Activated T-helper 1 cell treated with anti-CD3 and anti-CD28 coated beads, Interleukin-12 subunit alpha, Interleukin-12 subunit beta, Interleukin-2, Interleukin-4 antibody, amounts not matched to agents 30 ng/mL and 10 ng/mL and 1 ng/mL, durations not matched to agents 14 hours and 24 hours and 36 hours (primary cell): ENCODE measurements at regions of chr16 and their contacts with region 1.

Region 1: GRCh38 chr16:75110637-75111513 is 5.7 kb downstream of the LDHD start:
- DNase-seq: peak; percentile 77
- H3K4me3 Mint-ChIP-seq: peak overlapping the region; percentile 79
- H3K27ac Mint-ChIP-seq: peak overlapping the region; percentile 92
- H3K4me1 Mint-ChIP-seq: peaks cover 62% of the 10 kb centered on the region
- H3K27me3 Mint-ChIP-seq: no peaks in the 10 kb centered on the region

Region 2: GRCh38 chr16:74936902-74937560 is 173.8 kb before region 1 on chr16:
- intact Hi-C with region 1: loop called (anchors 1 kb)
- DNase-seq: no peak
- H3K4me3 Mint-ChIP-seq: no peak overlapping the region
- H3K27ac Mint-ChIP-seq: peak overlapping the region; percentile 72
- H3K4me1 Mint-ChIP-seq: peaks cover 6% of the 10 kb centered on the region
- H3K27me3 Mint-ChIP-seq: no peaks in the 10 kb centered on the region

Region 3: GRCh38 chr16:74998481-74999218 is 112.2 kb before region 1 on chr16 and contains the start of gene ZNRF1:
- intact Hi-C with region 1: loop called (anchors 1 kb)
- DNase-seq: peak; percentile 74
- H3K4me3 Mint-ChIP-seq: peak within 1 kb of the TSS; percentile 91
- H3K27ac Mint-ChIP-seq: peak within 1 kb of the TSS; percentile 86
- H3K4me1 Mint-ChIP-seq: peaks cover 43% of the 10 kb centered on the region
- H3K27me3 Mint-ChIP-seq: peaks cover 2% of the 10 kb centered on the region
- total RNA-seq, gene ZNRF1: 51.2 and 52.2 TPM in 2 replicates

Region 4: GRCh38 chr16:75064403-75065148 is 46.3 kb before region 1 on chr16:
- intact Hi-C with region 1: loop called (anchors 1 kb)
- DNase-seq: peak; percentile 17
- H3K4me3 Mint-ChIP-seq: peak overlapping the region; percentile 70
- H3K27ac Mint-ChIP-seq: peak overlapping the region; percentile 85
- H3K4me1 Mint-ChIP-seq: peaks cover 79% of the 10 kb centered on the region
- H3K27me3 Mint-ChIP-seq: no peaks in the 10 kb centered on the region

Region 5: DNA sequence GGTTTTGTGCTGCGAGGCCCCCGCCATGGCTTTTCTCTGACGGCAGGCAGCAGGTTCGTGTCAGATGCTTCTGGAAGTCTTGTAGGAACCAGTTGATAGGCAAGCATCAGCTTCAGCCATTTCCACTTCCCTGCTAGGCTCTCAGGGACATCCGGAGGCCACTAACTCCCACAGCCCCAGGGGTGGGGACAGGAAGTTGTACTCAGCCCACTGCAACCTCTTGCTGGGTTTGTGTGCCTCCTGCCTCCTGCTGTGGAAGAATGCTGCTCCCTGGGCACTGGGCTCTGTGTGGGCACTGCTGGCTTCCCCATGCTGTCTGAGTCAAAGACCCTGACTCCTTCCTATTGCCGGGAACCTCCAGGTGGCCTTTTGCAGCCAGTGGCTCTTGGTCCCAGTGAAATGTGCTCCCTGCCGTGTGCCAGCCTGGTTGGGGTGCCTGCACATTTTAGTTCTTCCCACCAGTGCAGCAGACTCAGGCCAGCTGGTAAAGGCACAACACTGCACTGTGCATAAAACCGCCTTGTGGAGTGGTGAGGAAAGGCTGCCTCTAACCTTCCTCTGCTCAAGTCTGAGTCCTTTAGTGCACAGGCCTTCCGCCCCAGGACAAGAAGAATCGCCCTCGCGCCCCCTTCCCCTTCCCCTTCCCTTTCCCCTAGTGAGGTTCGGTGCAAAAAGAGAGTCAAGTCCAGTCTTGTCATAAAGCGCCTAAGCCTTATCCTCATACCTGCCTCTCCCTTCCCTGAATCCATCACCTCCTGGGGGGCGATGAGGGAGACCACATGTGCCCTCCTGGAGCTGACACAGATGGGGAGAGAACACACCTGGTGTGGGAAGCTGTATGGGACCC is 10.9 kb before region 1 on chr16:
- intact Hi-C with region 1: loop called (anchors 1 kb)
- DNase-seq: peak; percentile 41
- H3K4me3 Mint-ChIP-seq: peak overlapping the region; percentile 46
- H3K27ac Mint-ChIP-seq: peak overlapping the region; percentile 95
- H3K4me1 Mint-ChIP-seq: peaks cover 83% of the 10 kb centered on the region
- H3K27me3 Mint-ChIP-seq: no peaks in the 10 kb centered on the region

Region 6: DNA sequence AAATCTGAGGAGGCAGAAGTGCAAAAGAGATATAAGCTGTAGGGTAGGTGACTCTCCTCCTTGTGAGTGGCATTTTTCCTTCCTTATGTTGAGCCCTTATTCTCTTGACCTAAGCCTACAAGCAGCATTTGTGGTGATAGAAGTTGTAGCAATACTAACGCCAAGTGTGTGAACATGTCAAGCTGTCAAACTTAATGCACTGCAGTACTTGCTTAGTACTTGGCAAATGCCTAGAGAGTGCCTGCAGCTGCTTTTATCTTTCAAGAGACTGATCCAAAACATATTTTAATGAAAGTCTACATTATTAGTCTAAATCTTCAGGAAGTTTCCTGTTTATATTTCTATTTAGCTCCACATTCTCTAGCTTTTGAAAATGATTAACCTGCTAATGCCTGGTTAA is 1249.5 kb after region 1 on chr16:
- intact Hi-C with region 1: no loop called
- DNase-seq: no peak
- H3K4me3 Mint-ChIP-seq: no peak overlapping the region
- H3K27ac Mint-ChIP-seq: no peak overlapping the region
- H3K4me1 Mint-ChIP-seq: no peaks in the 10 kb centered on the region
- H3K27me3 Mint-ChIP-seq: no peaks in the 10 kb centered on the region